Caco-2 (cell line): ENCODE measurements at regions of chr1 and their contacts with region 1.

Region 1: GRCh38 chr1:209354111-209354839 is 229.2 kb upstream of the CAMK1G start:
- DNase-seq: peak; percentile 80 to 84
- H3K4me3 ChIP-seq: no peak overlapping the region
- H3K4me3 Mint-ChIP-seq: no peak overlapping the region
- H3K27ac Mint-ChIP-seq: no peak overlapping the region
- H3K4me1 ChIP-seq: peaks cover 38% of the 10 kb centered on the region
- H3K4me1 Mint-ChIP-seq: peaks cover 23% of the 10 kb centered on the region
- H3K27me3 ChIP-seq: no peaks in the 10 kb centered on the region
- H3K27me3 Mint-ChIP-seq: no peaks in the 10 kb centered on the region
- CTCF ChIP-seq: peak; percentile 82 to 90

Region 2: GRCh38 chr1:209095627-209096595 is 258.4 kb before region 1 on chr1:
- CTCF ChIA-PET with region 1: no interaction called
- POLR2A ChIA-PET with region 1: no interaction called
- intact Hi-C with region 1: loop called (anchors 10 kb)
- DNase-seq: peak; percentile 56 to 59
- H3K4me3 ChIP-seq: no peak overlapping the region
- H3K4me3 Mint-ChIP-seq: no peak overlapping the region
- H3K27ac Mint-ChIP-seq: no peak overlapping the region
- H3K4me1 ChIP-seq: peaks cover 7% of the 10 kb centered on the region
- H3K4me1 Mint-ChIP-seq: peaks cover 10% of the 10 kb centered on the region
- H3K27me3 ChIP-seq: no peaks in the 10 kb centered on the region
- H3K27me3 Mint-ChIP-seq: peaks cover 3% of the 10 kb centered on the region
- CTCF ChIP-seq: no peak

Region 3: GRCh38 chr1:209248649-209249279 is 105.5 kb before region 1 on chr1:
- CTCF ChIA-PET with region 1: interaction called, 5 read pairs
- POLR2A ChIA-PET with region 1: no interaction called
- intact Hi-C with region 1: loop called (anchors 1 kb)
- DNase-seq: peak; percentile 67 to 71
- H3K4me3 ChIP-seq: no peak overlapping the region
- H3K4me3 Mint-ChIP-seq: no peak overlapping the region
- H3K27ac Mint-ChIP-seq: no peak overlapping the region
- H3K4me1 ChIP-seq: no peaks in the 10 kb centered on the region
- H3K4me1 Mint-ChIP-seq: no peaks in the 10 kb centered on the region
- H3K27me3 ChIP-seq: no peaks in the 10 kb centered on the region
- H3K27me3 Mint-ChIP-seq: peaks cover 3% of the 10 kb centered on the region
- CTCF ChIP-seq: peak; percentile 88

Region 4: DNA sequence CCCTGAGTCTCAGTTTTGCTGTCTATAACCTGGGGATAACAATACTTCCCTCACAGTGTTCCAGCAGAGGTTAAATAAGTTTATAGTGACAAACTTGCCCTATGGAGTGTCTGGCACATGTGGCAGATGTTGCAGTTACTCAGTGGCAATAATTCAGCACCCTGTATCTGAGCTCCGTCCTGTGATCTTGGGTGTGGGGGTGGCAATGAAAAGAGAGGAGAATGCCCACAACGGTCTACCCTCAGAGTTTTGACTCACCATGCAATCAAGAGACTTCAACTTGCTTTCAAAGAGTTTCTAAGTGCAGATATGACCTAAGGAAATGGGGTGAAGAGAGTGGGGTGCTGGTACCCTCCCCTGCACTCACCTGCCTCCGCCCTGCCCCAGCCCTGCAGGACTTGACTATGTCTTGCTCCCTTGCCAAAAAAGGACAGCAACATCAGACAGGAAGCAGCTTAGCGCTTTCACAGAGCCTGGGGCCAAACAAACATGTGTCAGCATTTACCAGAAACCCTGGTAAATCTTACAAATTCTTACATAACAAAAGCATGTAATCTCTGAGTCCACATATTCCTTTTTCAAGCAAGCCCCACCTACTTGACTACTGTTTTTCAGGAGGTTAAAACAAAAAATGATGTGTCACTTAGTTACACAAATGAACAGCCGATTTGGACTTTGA is 44.2 kb after region 1 on chr1:
- CTCF ChIA-PET with region 1: interaction called, 3 read pairs
- POLR2A ChIA-PET with region 1: no interaction called
- intact Hi-C with region 1: loop called (anchors 5 kb)
- DNase-seq: peak; percentile 78 to 82
- H3K4me3 ChIP-seq: no peak overlapping the region
- H3K4me3 Mint-ChIP-seq: peak overlapping the region; percentile 27
- H3K27ac Mint-ChIP-seq: peak overlapping the region; percentile 71
- H3K4me1 ChIP-seq: peaks cover 59% of the 10 kb centered on the region
- H3K4me1 Mint-ChIP-seq: peaks cover 22% of the 10 kb centered on the region
- H3K27me3 ChIP-seq: no peaks in the 10 kb centered on the region
- H3K27me3 Mint-ChIP-seq: no peaks in the 10 kb centered on the region
- CTCF ChIP-seq: no peak

Region 5: GRCh38 chr1:209490013-209490412 is 135.7 kb after region 1 on chr1:
- CTCF ChIA-PET with region 1: no interaction called
- POLR2A ChIA-PET with region 1: no interaction called
- intact Hi-C with region 1: loop called (anchors 10 kb)
- DNase-seq: no peak
- H3K4me3 ChIP-seq: no peak overlapping the region
- H3K4me3 Mint-ChIP-seq: no peak overlapping the region
- H3K27ac Mint-ChIP-seq: no peak overlapping the region
- H3K4me1 ChIP-seq: no peaks in the 10 kb centered on the region
- H3K4me1 Mint-ChIP-seq: no peaks in the 10 kb centered on the region
- H3K27me3 ChIP-seq: no peaks in the 10 kb centered on the region
- H3K27me3 Mint-ChIP-seq: peaks cover 6% of the 10 kb centered on the region
- CTCF ChIP-seq: peak; percentile 46 to 60